Tibial artery (tissue), 4 donors: ENCODE measurements at regions of chr19 and their contacts with region 1.

Region 1: GRCh38 chr19:17305517-17306284 is at the start of gene MRPL34:
- DNase-seq: peak; percentile 93 to 97
- H3K4me3 ChIP-seq: peak within 1 kb of the TSS; percentile 60 to 84
- H3K27ac ChIP-seq: peak within 1 kb of the TSS; percentile 88 to 95
- H3K4me1 ChIP-seq: peaks cover 0 to 64% (median 48%) of the 10 kb centered on the region in 4 donors
- H3K27me3 ChIP-seq: no peaks in the 10 kb centered on the region
- CTCF ChIP-seq: peak; percentile 79 to 86

Region 2: DNA sequence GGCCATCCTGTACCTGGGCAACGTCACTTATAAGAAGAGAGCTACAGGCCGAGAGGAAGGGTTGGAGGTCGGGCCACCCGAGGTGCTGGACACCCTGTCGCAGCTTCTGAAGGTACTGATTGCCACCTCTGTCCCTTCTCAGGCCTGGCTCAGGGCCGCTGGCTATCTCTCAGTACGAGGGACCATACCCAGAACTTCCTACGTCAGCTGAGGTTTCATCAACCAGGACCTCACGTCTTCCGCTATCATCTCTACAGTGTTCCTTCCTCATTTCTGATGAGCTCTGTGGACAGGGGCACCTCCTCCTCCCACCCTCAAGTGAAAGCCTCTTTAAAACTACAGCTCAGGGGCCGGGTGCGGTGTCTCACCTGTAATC is 148.8 kb before region 1 on chr19:
- intact Hi-C with region 1: no loop called
- DNase-seq: no peak
- H3K4me3 ChIP-seq: no peak overlapping the region
- H3K27ac ChIP-seq: no peak overlapping the region
- H3K4me1 ChIP-seq: no peaks in the 10 kb centered on the region
- H3K27me3 ChIP-seq: no peaks in the 10 kb centered on the region
- CTCF ChIP-seq: no peak

Region 3: GRCh38 chr19:17328847-17329740 is 23.4 kb after region 1 on chr19:
- intact Hi-C with region 1: loop called (anchors 1 kb)
- DNase-seq: no peak
- H3K4me3 ChIP-seq: peak overlapping the region in 1 of 2 donors; percentile 1
- H3K27ac ChIP-seq: no peak overlapping the region
- H3K4me1 ChIP-seq: peaks cover 0 to 66% (median 46%) of the 10 kb centered on the region in 4 donors
- H3K27me3 ChIP-seq: no peaks in the 10 kb centered on the region
- CTCF ChIP-seq: no peak

Region 4: DNA sequence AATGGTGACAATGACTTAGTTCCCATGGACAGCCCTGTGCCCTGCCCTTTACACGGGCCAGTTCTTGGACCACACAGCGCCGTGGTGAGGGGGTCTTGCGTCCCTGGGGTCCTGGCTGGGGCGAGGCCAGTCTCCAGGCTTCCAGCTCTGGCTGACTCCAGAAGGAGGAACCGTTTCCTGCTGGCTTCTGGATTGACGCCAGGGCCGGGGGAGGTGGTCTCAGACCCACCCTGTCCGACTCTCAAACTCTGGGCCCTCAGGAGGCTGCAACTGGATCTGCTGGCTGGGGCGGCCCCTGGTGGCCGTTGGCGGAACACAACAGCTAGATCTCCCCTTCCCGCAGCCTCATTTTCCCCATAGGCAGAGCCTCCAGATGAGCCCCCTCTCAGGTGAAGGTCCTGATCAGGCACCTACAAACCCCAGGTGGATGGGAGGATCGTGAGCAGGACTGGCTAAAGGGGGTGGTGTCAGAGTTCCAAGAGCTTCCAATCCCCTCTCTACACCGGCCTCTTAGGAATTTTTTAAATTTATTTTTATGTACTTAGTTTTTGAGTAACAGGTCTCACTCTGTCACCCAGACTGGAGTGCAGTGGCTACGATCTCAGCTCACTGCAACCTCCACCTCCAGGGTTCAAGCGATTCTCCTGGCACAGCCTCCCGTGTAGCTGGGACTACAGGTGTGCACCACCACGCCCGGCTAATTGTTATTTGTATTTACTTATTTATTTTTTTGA is 80.3 kb after region 1 on chr19:
- intact Hi-C with region 1: loop called (anchors 5 kb)
- DNase-seq: peak; percentile 45 to 79
- H3K4me3 ChIP-seq: no peak overlapping the region
- H3K27ac ChIP-seq: no peak overlapping the region
- H3K4me1 ChIP-seq: peaks cover 0 to 22% (median 18%) of the 10 kb centered on the region in 4 donors
- H3K27me3 ChIP-seq: no peaks in the 10 kb centered on the region
- CTCF ChIP-seq: peak; percentile 88 to 94